HepG2 (cell line): ENCODE measurements at regions of chr10 and their contacts with region 1.

Region 1: DNA sequence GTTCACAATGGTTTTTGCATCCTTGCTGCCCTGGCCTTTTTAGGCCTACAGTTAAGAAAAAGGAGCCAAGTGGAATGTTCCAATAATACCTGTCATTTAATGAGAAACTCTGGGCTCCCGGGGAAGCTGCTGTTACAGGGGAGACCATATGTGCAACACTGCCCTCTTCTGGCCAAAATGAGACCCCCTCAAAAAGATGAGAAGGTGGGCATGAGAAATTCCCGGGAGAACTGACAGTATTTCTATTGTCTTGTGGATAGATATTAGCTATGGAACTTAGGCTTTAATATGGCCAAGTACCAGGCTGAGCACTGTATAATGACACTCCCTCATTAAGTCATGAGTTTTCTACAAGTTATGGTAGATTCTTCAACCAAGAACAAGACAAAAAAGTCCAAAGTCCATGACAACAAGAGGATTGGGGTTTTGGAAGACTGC is 99.4 kb downstream of the CCDC3 start:
- DNase-seq: peak; percentile 50
- ATAC-seq: peak; percentile 57; the same call in 2 of the 3 replicates
- H3K4me3 ChIP-seq: no peak overlapping the region
- H3K27ac ChIP-seq: no peak overlapping the region
- H3K4me1 ChIP-seq: no peaks in the 10 kb centered on the region
- H3K27me3 ChIP-seq: peaks cover 0 to 2% of the 10 kb centered on the region in 2 experiments; a peak in 2 of 5 replicates
- CTCF ChIP-seq: peak; percentile 63
- EP300 ChIP-seq: no peak
- POLR2A ChIP-seq: no peak
- RAD21 ChIP-seq: peak; percentile 21; the same call in 1 of the 2 replicates

Region 2: DNA sequence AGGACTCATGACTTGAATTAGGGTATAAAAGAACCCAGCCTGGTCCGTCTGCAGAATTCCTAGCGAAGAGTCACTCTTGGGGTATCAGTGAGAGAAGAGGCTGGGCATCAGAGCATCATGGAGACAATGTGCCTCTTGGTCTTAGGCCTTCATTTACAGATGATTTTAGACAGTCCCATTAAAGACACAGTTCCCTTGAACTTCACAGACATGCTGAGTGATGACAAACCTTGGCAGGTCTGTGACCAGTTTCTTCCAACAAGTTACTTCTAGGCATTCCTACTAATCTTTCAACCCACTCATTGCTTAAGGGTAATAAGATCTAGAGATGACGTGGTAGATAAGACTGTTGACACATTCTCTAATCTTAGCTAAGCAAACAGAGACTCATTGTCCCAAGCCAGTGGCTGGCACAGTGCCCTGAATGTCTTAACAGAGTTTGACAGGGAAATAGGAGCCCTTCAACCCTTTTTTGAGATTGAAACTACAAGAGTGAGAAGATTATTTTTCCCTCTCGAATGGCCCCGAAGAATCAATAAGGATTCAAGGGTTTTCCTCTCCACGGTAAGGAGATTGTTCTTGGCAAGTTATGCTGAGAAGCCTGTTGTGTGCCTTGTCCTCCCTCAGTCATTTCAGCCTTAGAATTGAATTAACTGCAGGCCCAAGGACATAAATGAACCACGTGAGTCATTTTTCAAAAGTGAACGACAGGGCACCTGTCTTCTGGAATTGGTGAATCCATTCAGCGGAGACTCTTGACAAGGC is 181.8 kb before region 1 on chr10:
- CTCF ChIA-PET with region 1: interaction called, 3 read pairs
- POLR2A ChIA-PET with region 1: no interaction called
- in situ Hi-C with region 1: loop called (anchors 5 kb)
- intact Hi-C with region 1: loop called (anchors 1 kb)
- DNase-seq: peak; percentile 76
- ATAC-seq: peak; percentile 47; the same call in 2 of the 3 replicates
- H3K4me3 ChIP-seq: no peak overlapping the region
- H3K27ac ChIP-seq: no peak overlapping the region
- H3K4me1 ChIP-seq: peaks cover 11% of the 10 kb centered on the region
- H3K27me3 ChIP-seq: no peaks in the 10 kb centered on the region; a peak in 2 of 5 replicates
- CTCF ChIP-seq: no peak
- EP300 ChIP-seq: peak in 1 of 2 experiments; percentile 44; a peak in 1 of 4 replicates
- POLR2A ChIP-seq: no peak
- RAD21 ChIP-seq: no peak

Region 3: GRCh38 chr10:12782537-12782936 is 119.6 kb before region 1 on chr10:
- CTCF ChIA-PET with region 1: no interaction called
- POLR2A ChIA-PET with region 1: no interaction called
- in situ Hi-C with region 1: no loop called
- intact Hi-C with region 1: loop called (anchors 1 kb)
- DNase-seq: peak; percentile 29
- ATAC-seq: peak; percentile 36; the same call in 1 of the 3 replicates
- H3K4me3 ChIP-seq: no peak overlapping the region
- H3K27ac ChIP-seq: no peak overlapping the region
- H3K4me1 ChIP-seq: no peaks in the 10 kb centered on the region
- H3K27me3 ChIP-seq: peaks cover 0 to 2% of the 10 kb centered on the region in 2 experiments; a peak in 2 of 5 replicates
- CTCF ChIP-seq: peak; percentile 67
- EP300 ChIP-seq: no peak
- POLR2A ChIP-seq: no peak
- RAD21 ChIP-seq: no peak

Region 4: GRCh38 chr10:12919574-12919973 is 17.4 kb after region 1 on chr10:
- CTCF ChIA-PET with region 1: no interaction called
- POLR2A ChIA-PET with region 1: no interaction called
- in situ Hi-C with region 1: no loop called
- intact Hi-C with region 1: no loop called
- DNase-seq: no peak
- ATAC-seq: no peak
- H3K4me3 ChIP-seq: no peak overlapping the region
- H3K27ac ChIP-seq: no peak overlapping the region
- H3K4me1 ChIP-seq: no peaks in the 10 kb centered on the region
- H3K27me3 ChIP-seq: peaks cover 0 to 6% of the 10 kb centered on the region in 2 experiments; a peak in 2 of 5 replicates
- CTCF ChIP-seq: no peak
- EP300 ChIP-seq: no peak
- POLR2A ChIP-seq: no peak
- RAD21 ChIP-seq: no peak